ENCODE measurements at regions of chr11 and their contacts with region 1.

Region 1: GRCh38 chr11:72080256-72080974 is at the starts of genes LRRC51 and NUMA1:
- DNase-seq: peak; percentile 94 to 100 (median 94)
- ATAC-seq: peak; percentile 95
- H3K4me3 ChIP-seq: peak within 1 kb of the TSS; percentile 70
- H3K27ac ChIP-seq: peak within 1 kb of the TSS; percentile 86
- H3K4me1 ChIP-seq: peaks cover 6 to 15% of the 10 kb centered on the region in 2 experiments; a peak in 3 of 5 replicates
- H3K27me3 ChIP-seq: no peaks in the 10 kb centered on the region
- CTCF ChIP-seq: no peak
- EP300 ChIP-seq: no peak
- POLR2A ChIP-seq: peak; percentile 90
- RAD21 ChIP-seq: 0 out of 4 replicates have a peak, but pooled peaks of 1 of the 2 experiments have one; percentile 7
- polyA plus RNA-seq, gene LRRC51: 6.9 to 8.6 TPM
- polyA plus RNA-seq, gene NUMA1: 4.1 to 7.6 TPM

Region 2: DNA sequence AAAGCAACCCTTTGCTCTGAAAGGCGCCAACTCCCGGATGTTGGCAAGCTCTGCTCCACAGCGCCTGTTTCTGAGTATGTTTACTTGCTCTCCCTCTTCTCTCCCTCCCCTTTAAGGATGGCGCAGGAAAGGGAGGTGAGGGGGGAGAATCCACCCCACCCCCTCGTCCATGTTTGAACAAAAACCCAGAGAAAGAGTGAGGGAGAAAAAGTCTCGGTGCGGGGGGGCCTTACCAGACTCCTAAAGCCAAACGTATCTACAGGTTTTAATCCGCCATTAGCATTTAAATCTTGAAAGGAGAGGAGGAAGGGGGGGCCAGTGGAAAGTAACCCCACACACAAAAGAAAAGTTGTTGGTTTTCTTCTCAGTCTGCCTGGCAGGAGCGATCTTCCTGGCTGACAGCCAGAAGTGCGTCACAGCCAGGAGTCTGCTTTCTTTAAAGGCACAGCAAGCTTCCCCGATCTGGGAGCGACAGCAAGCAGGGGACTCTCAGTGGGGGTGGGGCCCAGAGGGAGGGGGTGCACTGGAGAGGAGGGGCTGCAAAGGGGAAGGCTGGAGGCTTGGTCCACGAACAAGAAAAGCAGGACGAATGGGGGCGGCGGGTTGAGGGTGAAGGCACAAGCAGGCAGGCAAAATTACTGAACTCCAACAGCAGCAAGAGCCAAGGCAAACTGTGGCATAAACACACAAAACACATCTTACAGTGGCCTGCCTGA is 39.5 kb before region 1 on chr11:
- CTCF ChIA-PET with region 1: no interaction called
- POLR2A ChIA-PET with region 1: interaction called, 3 read pairs
- in situ Hi-C with region 1: no loop called
- intact Hi-C with region 1: loop called (anchors 2 kb)
- DNase-seq: peak; percentile 79 to 88 (median 82)
- ATAC-seq: peak; percentile 88
- H3K4me3 ChIP-seq: peak overlapping the region; percentile 44
- H3K27ac ChIP-seq: peak overlapping the region; percentile 78
- H3K4me1 ChIP-seq: peaks cover 26 to 30% of the 10 kb centered on the region in 2 experiments
- H3K27me3 ChIP-seq: no peaks in the 10 kb centered on the region
- CTCF ChIP-seq: no peak
- EP300 ChIP-seq: no peak
- POLR2A ChIP-seq: no peak
- RAD21 ChIP-seq: no peak

Region 3: DNA sequence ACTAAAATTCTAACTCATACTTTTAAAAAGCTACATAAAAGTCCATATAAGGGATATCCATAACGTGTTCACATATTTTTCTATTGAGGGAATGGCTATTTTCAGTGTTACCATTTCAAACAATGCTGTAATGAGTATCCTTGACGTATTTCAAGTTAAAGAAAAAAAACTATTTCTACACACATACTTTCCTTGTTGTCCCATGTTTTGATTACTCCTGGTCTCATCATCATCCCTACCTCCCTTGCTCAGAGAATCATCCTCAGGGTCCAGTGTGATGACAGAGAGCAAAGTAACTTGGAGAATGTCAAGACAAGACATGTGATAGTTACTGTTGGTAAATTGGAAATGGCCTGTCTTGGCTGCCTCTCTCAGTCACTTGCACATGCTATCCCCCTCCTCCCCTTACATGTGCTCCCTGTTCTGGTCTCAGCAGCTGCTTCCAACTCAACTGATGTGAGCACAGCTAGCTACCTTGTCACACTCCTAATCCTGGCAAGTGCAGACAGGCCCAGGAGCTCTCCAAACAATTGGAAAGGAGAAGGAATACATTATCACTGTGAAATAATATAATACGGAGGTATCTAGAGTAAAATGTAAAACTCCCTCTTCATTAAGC is 21.9 kb before region 1 on chr11:
- CTCF ChIA-PET with region 1: interaction called, 3 read pairs
- POLR2A ChIA-PET with region 1: interaction called, 10 read pairs
- in situ Hi-C with region 1: no loop called
- intact Hi-C with region 1: no loop called
- DNase-seq: no peak
- ATAC-seq: peak; percentile 56
- H3K4me3 ChIP-seq: no peak overlapping the region
- H3K27ac ChIP-seq: no peak overlapping the region
- H3K4me1 ChIP-seq: no peaks in the 10 kb centered on the region; a peak in 1 of 5 replicates
- H3K27me3 ChIP-seq: no peaks in the 10 kb centered on the region
- CTCF ChIP-seq: no peak
- EP300 ChIP-seq: no peak
- POLR2A ChIP-seq: no peak
- RAD21 ChIP-seq: no peak

Region 4: DNA sequence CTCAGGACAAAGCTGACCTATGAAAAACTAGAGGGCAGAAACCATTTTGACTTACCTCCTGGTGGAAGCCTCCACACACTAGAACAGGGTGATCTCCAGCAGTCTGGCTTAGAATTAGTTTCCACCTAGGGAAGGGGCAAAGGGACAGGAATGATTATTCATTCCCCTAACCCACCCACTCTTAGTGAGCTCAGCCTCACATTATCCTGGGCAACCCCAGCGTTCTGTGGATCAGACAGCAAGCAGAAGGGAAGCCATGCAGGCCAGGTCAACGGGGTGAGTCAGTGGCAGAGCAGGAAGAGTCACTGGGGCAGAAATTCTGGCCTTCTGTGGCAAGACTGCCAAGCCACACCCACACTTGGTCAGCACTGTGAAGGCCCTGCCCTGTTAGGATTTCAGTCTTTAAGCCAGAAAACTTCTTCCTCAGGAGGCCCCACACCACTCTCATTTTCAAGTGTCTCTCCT is 10.6 kb before region 1 on chr11:
- CTCF ChIA-PET with region 1: no interaction called
- POLR2A ChIA-PET with region 1: interaction called, 13 read pairs
- in situ Hi-C with region 1: no loop called
- intact Hi-C with region 1: no loop called
- DNase-seq: peak in 3 of 4 experiments; percentile 25 to 60 (median 27)
- ATAC-seq: peak; percentile 84
- H3K4me3 ChIP-seq: no peak overlapping the region
- H3K27ac ChIP-seq: peak overlapping the region; percentile 64; the same call in 2 of the 3 replicates
- H3K4me1 ChIP-seq: peaks cover 8 to 11% of the 10 kb centered on the region in 2 experiments; a peak in 4 of 5 replicates
- H3K27me3 ChIP-seq: no peaks in the 10 kb centered on the region
- CTCF ChIP-seq: no peak
- EP300 ChIP-seq: no peak
- POLR2A ChIP-seq: no peak
- RAD21 ChIP-seq: no peak

Region 5: DNA sequence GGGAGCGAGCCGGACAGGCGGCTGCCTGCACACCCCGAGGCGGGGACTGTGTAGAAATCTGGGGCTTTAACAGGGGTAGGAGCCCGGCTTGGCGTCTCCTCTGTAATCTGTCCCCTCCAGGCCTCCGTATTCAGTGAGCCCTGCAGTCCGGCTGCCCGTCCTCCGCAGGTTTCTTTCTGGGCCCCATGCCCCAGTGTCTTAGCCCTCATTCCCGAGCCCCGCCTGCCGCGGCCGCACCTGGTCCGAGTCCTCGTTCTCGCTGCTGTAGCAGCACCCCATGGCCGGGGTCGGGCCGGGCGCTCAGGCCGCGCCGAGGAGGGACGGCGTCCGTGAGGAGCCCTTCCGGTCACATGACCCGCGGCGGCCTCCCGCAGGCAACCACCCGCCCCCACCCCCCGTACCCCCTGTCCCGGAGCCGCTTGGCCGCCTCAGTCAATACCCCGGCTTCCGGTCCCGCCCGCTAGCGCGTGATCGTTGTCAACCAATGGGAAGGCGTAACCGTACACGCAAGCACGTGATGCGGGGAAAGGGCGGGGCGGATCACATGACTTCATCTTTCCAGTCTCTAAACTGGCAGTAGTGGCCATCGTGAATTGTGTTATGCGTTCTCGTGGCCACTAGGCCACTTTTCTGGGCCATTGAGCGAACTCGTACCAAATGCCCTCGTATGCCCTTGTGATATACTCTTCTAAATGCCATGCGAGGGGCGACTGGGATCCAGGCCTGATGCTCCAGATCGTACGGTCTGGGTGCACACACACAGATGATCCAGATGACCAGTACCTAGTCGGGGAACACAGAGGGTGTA is 22.7 kb after region 1 on chr11 and contains the start of gene LAMTOR1:
- CTCF ChIA-PET with region 1: no interaction called
- POLR2A ChIA-PET with region 1: interaction called, 21 read pairs
- in situ Hi-C with region 1: no loop called
- intact Hi-C with region 1: loop called (anchors 1 kb)
- DNase-seq: peak; percentile 96 to 100 (median 96)
- ATAC-seq: peak; percentile 96
- H3K4me3 ChIP-seq: peak within 1 kb of the TSS; percentile 77
- H3K27ac ChIP-seq: peak within 1 kb of the TSS; percentile 96
- H3K4me1 ChIP-seq: peaks cover 12 to 39% of the 10 kb centered on the region in 2 experiments
- H3K27me3 ChIP-seq: no peaks in the 10 kb centered on the region
- CTCF ChIP-seq: peak; percentile 49 to 71 (median 66)
- EP300 ChIP-seq: no peak; the same call in none of the 2 replicates
- POLR2A ChIP-seq: peak; percentile 91
- RAD21 ChIP-seq: peak in 1 of 2 experiments; percentile 32; a peak in 3 of 4 replicates
- polyA plus RNA-seq, gene LAMTOR1: 91.1 to 97.5 TPM

Region 6: GRCh38 chr11:72112321-72113219 is 32.2 kb after region 1 on chr11 and contains the start of gene ANAPC15:
- CTCF ChIA-PET with region 1: no interaction called
- POLR2A ChIA-PET with region 1: interaction called, 4 read pairs
- in situ Hi-C with region 1: no loop called
- intact Hi-C with region 1: loop called (anchors 1 kb)
- DNase-seq: peak; percentile 86 to 99 (median 91)
- ATAC-seq: peak; percentile 96
- H3K4me3 ChIP-seq: peak within 1 kb of the TSS; percentile 53
- H3K27ac ChIP-seq: peak within 1 kb of the TSS; percentile 97
- H3K4me1 ChIP-seq: peaks cover 6 to 29% of the 10 kb centered on the region in 2 experiments
- H3K27me3 ChIP-seq: no peaks in the 10 kb centered on the region
- CTCF ChIP-seq: no peak
- EP300 ChIP-seq: peak; percentile 34
- POLR2A ChIP-seq: peak; percentile 96
- RAD21 ChIP-seq: 0 out of 4 replicates have a peak, but pooled peaks of 1 of the 2 experiments have one; percentile 7
- polyA plus RNA-seq, gene ANAPC15: 197 to 254 TPM

Region 7: GRCh38 chr11:72244361-72245262 is 164.2 kb after region 1 on chr11:
- CTCF ChIA-PET with region 1: no interaction called
- POLR2A ChIA-PET with region 1: no interaction called
- in situ Hi-C with region 1: no loop called
- intact Hi-C with region 1: no loop called
- DNase-seq: no peak
- ATAC-seq: no peak; the same call in 2 of the 3 replicates
- H3K4me3 ChIP-seq: no peak overlapping the region
- H3K27ac ChIP-seq: no peak overlapping the region
- H3K4me1 ChIP-seq: peaks cover 0 to 17% of the 10 kb centered on the region in 2 experiments; a peak in 2 of 5 replicates
- H3K27me3 ChIP-seq: peaks cover 25 to 36% of the 10 kb centered on the region in 2 experiments
- CTCF ChIP-seq: no peak
- EP300 ChIP-seq: no peak
- POLR2A ChIP-seq: no peak
- RAD21 ChIP-seq: no peak